ENCODE measurements at regions of chr1 and their contacts with region 1.

Region 1: DNA sequence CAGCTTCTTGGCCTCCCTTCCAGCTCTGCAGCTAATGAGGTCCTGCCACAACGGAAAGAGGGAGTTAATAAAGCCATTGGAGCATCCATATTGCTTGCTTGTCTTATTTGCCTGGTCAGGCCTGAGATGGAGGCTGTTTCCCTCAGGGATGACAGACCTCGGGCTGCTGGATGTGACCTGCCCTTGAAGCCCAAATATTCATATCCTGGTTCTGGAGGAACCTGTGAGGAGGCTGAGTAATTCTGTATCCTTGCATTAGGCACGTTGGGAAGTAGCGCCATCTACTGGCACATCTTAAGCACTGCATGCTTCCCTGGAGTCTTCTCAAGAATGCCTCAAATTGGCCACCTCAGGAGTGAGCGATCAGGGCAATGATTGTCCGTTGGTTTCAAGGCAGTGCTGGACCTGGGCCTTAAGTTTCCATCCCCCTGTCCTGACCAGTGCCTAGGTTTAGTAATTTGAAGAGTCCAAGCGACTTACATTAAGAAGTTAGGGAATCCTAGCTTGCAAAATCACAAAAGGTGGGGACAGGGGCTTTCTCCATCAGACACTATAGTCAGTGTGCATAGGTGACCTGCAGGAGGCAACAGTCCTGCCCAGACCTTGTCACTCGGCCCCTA is 13.8 kb upstream of the NASP start:
- DNase-seq: peak; percentile 78
- H3K4me3 ChIP-seq: no peak overlapping the region
- H3K27ac ChIP-seq: no peak overlapping the region
- H3K4me1 ChIP-seq: no peaks in the 10 kb centered on the region
- H3K27me3 ChIP-seq: no peaks in the 10 kb centered on the region

Region 2: GRCh38 chr1:45359882-45360513 is 210.1 kb before region 1 on chr1:
- in situ Hi-C with region 1: loop called (anchors 10 kb)
- DNase-seq: peak; percentile 88
- H3K4me3 ChIP-seq: peak overlapping the region; percentile 30; the same call in 1 of the 2 replicates
- H3K27ac ChIP-seq: no peak overlapping the region
- H3K4me1 ChIP-seq: 0 out of 2 replicates have a peak, but pooled peaks cover 8% of the 10 kb centered on the region
- H3K27me3 ChIP-seq: no peaks in the 10 kb centered on the region

Region 3: GRCh38 chr1:45775794-45776193 is 205.7 kb after region 1 on chr1:
- in situ Hi-C with region 1: no loop called
- DNase-seq: no peak
- H3K4me3 ChIP-seq: no peak overlapping the region
- H3K27ac ChIP-seq: no peak overlapping the region
- H3K4me1 ChIP-seq: no peaks in the 10 kb centered on the region
- H3K27me3 ChIP-seq: no peaks in the 10 kb centered on the region

Measured in GM23248 (cell line).